ENCODE measurements at regions of chr4 and their contacts with region 1.

Region 1: DNA sequence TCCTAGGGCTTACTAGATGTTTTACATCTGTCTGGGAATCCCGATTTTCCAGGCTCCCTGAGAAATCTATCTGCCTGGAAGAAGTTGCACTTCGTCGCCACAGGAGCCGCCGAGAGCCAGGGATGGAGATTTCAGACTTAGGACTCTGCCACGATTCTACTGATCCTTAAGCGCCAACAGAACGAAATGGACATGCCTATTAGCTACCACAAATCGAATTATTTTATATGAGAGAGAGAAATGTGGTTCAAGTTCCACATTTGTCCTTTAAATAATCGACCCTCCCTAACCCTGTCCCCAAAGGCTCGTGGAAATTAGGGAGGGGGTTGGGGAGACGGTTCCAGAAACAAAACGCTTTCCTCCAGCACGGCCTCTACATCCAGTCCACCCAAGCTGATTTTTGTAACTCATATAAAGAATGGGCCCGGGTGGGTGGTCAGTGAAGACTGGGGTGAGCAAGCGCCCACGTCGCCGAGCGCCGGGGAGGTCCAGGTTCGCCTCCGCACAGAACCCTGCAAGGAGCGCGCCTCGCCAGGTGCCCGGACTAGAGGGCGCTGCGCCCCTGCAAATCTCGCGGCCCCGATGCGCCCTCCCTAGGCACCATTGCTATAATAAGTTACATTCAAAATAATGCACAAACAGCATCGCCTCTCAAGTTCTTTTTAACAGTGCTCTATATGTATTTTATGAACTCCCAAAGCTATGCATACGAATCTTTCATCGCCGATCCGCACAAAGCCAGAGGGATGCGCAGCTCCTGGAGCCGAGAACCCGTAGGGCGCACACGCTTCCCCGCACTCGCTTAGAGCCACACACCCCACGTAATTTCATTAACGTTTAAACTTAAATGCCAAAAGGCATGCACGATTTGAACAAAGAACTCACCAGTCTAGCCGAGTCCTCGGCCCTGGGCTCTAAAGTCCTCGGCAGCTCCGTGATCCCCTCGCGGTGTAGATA is 2.1 kb upstream of the FAT1 start:
- DNase-seq: peak; percentile 78 to 90 (median 86)
- ATAC-seq: peak; percentile 81
- H3K4me3 ChIP-seq: peak overlapping the region; percentile 63 to 76
- H3K27ac ChIP-seq: peak overlapping the region; percentile 79 to 90
- H3K4me1 ChIP-seq: peaks cover 0 to 15% of the 10 kb centered on the region in 2 donors
- H3K27me3 ChIP-seq: peaks cover 0 to 78% of the 10 kb centered on the region in 2 donors
- CTCF ChIP-seq: peak in 1 of 2 donors; percentile 19

Region 2: GRCh38 chr4:186936496-186937375 is 211.0 kb after region 1 on chr4:
- intact Hi-C with region 1: loop called in 1 of 2 experiments (anchors 10 kb)
- DNase-seq: peak in 1 of 4 donors; percentile 51
- ATAC-seq: peak; percentile 56
- H3K4me3 ChIP-seq: no peak overlapping the region
- H3K27ac ChIP-seq: peak overlapping the region; percentile 2 to 35
- H3K4me1 ChIP-seq: peaks cover 11 to 12% of the 10 kb centered on the region in 2 donors
- H3K27me3 ChIP-seq: no peaks in the 10 kb centered on the region
- CTCF ChIP-seq: no peak

Measured in left lung (tissue), 14 donors.